ENCODE measurements at regions of chr11 and their contacts with region 1.

Region 1: DNA sequence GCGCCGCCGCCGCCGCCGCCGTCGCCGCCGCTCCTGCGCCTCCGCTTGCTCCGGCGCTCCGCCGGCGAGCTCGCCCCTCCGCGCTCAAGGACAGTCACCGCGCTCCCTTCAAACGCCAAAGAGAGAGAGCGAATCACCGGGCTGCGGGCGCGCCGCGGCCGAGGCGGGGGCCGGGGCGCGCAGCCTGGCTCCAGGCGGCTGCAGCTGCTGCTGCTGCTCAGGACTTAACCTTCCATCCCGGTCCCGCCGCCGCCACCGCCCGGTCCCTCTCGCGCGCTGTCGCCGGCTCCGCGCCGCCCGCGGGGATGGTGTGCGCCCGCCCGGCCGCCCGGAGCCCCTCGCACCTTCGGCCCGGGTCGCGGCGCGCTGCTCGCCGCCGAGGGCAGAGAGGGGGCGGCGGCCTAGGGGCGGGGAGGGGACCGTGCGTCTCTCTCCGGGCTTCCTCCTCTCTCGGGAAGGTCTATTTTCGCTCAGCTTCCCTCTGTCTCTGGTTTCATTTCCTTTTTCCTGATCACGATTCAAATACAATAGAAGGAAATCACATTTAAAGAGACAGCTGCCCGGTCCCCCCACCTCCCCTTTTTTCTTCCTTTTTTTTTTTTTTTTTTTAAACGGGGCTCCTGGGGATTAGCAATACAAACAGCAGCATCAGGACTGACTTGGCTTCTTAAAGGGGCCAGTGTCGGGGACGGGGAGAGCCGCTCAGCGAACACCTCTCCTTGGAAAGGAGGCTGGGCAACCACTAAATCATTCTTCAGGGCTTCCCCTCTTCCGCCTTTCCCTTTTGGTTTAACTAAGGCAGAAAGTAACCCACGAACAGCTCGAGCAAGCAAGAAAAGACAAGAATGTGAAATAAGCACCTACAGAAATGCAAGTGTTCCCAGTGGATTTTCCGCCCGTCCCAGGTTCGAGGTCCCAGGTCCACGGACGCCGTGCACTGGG is 22.1 kb downstream of the LMO2 start:
- H3K4me3 Mint-ChIP-seq: peak overlapping the region; percentile 95
- H3K27ac Mint-ChIP-seq: peak overlapping the region; percentile 98
- H3K4me1 Mint-ChIP-seq: peaks cover 54% of the 10 kb centered on the region
- H3K27me3 Mint-ChIP-seq: no peaks in the 10 kb centered on the region

Region 2: GRCh38 chr11:33893711-33894397 is 24.1 kb after region 1 on chr11:
- intact Hi-C with region 1: loop called (anchors 2 kb)
- H3K4me3 Mint-ChIP-seq: peak overlapping the region; percentile 71
- H3K27ac Mint-ChIP-seq: peak overlapping the region; percentile 93
- H3K4me1 Mint-ChIP-seq: peaks cover 77% of the 10 kb centered on the region
- H3K27me3 Mint-ChIP-seq: no peaks in the 10 kb centered on the region

Region 3: DNA sequence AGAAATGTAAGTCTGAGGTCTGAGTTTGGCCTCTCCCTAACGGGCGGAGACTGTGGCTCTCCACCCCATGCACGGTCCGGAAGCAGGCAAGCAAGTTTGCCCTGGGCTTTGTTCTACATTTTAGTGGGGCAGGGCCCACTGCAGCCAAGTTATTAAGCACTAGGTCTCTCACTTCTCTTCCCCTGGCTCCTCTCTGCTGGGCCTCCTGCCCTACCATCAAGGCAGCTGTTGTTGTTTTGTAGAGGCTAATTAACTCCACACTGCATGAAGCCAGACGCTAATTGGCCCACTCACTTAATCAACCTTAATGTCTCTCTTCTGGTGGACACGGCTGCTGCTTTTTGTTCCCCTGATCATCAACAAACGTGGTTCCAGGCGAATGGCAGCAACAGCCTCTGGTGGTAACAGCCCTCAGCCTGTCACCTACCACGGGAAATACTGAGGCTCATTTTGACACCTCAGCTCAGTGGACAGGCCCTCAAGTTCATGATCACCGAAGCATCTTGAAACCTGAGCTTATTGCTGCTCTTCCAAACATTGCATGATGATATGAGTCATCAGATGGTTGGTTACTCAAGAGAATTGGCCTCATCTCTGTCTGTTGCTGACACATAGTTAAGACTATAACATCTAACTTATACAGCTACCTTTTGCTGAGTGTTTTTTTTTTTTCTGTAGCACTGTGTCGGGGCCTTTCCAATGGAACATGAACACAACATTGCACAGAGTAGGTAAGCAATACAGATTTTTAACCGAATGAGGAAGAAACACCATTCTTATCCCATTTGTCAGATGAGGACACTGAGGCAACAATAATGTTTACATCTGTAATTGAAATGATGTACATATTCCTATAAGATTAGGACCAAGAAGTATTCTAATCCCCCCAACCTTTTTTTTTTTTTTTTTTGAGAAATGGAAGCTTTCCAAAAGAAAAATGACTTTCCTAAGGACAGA is 42.9 kb after region 1 on chr11:
- intact Hi-C with region 1: loop called (anchors 5 kb)
- H3K4me3 Mint-ChIP-seq: peak overlapping the region; percentile 49
- H3K27ac Mint-ChIP-seq: peak overlapping the region; percentile 97
- H3K4me1 Mint-ChIP-seq: peaks cover 42% of the 10 kb centered on the region
- H3K27me3 Mint-ChIP-seq: no peaks in the 10 kb centered on the region

Region 4: GRCh38 chr11:33930317-33931021 is 60.7 kb after region 1 on chr11:
- intact Hi-C with region 1: loop called (anchors 2 kb)
- H3K4me3 Mint-ChIP-seq: peak overlapping the region; percentile 39
- H3K27ac Mint-ChIP-seq: peak overlapping the region; percentile 96
- H3K4me1 Mint-ChIP-seq: peaks cover 69% of the 10 kb centered on the region
- H3K27me3 Mint-ChIP-seq: no peaks in the 10 kb centered on the region

Measured in dendritic cell treated with granulocyte-macrophage colony-stimulating factor and Interleukin-4, amounts not matched to agents 40 ng/mL and 50 ng/mL, for 4 days (primary cell).